ENCODE measurements at regions of chr5 and their contacts with region 1.

Region 1: DNA sequence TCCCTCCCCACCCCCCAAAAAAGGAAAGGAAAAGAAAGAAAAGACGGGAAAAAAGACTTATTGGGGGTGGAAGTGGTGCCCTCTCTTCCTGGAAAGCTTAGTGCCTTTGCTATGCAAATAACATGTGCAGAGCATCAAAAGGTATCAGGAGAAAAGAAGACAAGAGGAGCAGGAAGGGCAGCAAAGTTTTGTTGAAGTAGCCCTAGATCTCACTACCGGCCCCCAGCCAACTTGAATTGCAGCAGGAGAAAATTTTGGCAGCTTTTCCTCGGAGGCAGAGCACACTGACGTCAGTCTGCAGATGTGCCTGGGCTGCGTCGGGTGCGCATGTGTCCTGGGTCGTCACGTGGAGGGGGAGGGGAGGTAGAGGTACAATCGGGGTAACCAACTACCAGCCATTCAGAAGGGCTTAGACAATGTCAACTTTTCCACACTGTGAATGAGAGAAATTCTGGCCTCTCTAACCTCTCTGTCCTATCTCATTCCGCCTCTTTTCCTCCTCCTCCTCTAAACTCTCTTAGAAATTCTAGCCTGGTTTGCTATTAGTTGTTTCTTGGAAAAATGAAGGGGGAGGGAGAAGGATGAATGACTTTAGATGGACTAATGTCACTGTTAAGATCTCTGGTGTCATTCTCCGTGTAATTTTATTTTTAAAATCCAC is at the start of gene ADAMTS6:
- DNase-seq: peak; percentile 85 to 96 (median 92)
- H3K4me3 ChIP-seq: peak within 1 kb of the TSS; percentile 84 to 94 (median 84)
- H3K27ac ChIP-seq: peak within 1 kb of the TSS; percentile 58 to 68
- H3K4me1 ChIP-seq: peaks cover 0 to 4% (median 0%) of the 10 kb centered on the region in 3 donors
- H3K27me3 ChIP-seq: peaks cover 3% of the 10 kb centered on the region
- CTCF ChIP-seq: no peak
- total RNA-seq, gene ADAMTS6: 6.7 TPM

Region 2: GRCh38 chr5:64807520-64807919 is 674.2 kb before region 1 on chr5:
- intact Hi-C with region 1: loop called (anchors 5 kb)
- DNase-seq: no peak
- H3K4me3 ChIP-seq: no peak overlapping the region
- H3K27ac ChIP-seq: no peak overlapping the region
- H3K4me1 ChIP-seq: no peaks in the 10 kb centered on the region
- H3K27me3 ChIP-seq: no peaks in the 10 kb centered on the region
- CTCF ChIP-seq: no peak

Region 3: GRCh38 chr5:64958757-64959391 is 522.9 kb before region 1 on chr5:
- intact Hi-C with region 1: loop called (anchors 10 kb)
- DNase-seq: peak in 1 of 5 donors; percentile 51
- H3K4me3 ChIP-seq: no peak overlapping the region
- H3K27ac ChIP-seq: no peak overlapping the region
- H3K4me1 ChIP-seq: no peaks in the 10 kb centered on the region
- H3K27me3 ChIP-seq: no peaks in the 10 kb centered on the region
- CTCF ChIP-seq: peak; percentile 39

Region 4: GRCh38 chr5:65334077-65334476 is 147.7 kb before region 1 on chr5:
- intact Hi-C with region 1: no loop called
- DNase-seq: no peak
- H3K4me3 ChIP-seq: no peak overlapping the region
- H3K27ac ChIP-seq: no peak overlapping the region
- H3K4me1 ChIP-seq: no peaks in the 10 kb centered on the region
- H3K27me3 ChIP-seq: no peaks in the 10 kb centered on the region
- CTCF ChIP-seq: no peak